Tibial artery (tissue), 4 donors: ENCODE measurements at regions of chr16 and their contacts with region 1.

Region 1: DNA sequence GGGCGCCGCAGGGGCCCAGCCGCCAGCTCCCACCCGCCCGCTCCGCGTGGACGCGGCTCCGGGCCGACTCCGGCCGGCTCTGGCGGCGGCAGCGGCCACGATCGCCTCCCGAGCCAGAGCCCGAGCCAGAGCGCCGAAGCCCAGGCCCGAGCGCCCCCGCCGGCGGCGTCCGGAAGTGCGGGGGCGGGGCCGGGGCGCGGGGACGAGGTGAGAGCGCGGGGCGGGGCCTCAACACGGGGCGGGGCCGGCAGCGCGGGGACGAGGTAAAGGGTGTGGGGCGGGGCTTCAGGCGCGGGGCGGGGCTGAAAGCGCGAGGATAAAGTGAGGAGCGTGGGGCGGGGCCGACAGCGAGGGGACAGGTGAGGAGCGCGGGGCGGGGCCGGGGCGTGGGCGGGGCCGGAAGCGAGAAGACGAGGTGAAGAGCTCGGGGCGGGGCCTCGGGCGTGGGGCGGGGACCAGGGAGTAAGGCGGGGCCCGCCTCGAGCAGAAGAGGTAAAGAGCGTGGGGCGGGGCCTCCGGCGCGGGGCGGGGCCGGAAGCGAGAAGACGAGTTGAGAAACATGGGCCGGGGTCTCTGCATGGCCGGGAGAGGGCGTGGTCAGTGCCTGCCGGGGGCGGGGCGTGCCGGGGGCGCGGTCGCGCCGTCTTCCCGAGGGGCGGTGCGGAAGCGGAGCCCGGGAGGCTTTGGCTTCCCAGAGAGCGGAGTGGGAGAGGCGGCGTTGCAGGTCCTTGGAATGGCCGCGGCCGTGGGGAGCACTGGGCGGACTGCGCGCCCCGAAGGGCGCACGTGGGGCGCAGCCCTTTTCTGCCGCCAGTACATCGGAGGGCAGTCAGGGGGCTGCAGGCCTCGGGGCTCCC is at the start of gene AXIN1:
- DNase-seq: peak; percentile 99 to 100
- H3K4me3 ChIP-seq: peak within 1 kb of the TSS; percentile 62 to 91
- H3K27ac ChIP-seq: peak within 1 kb of the TSS; percentile 81 to 90
- H3K4me1 ChIP-seq: peaks cover 0 to 23% (median 16%) of the 10 kb centered on the region in 4 donors
- H3K27me3 ChIP-seq: no peaks in the 10 kb centered on the region
- CTCF ChIP-seq: peak; percentile 51 to 62

Region 2: GRCh38 chr16:401468-402348 is 48.9 kb after region 1 on chr16 and contains the start of gene DECR2:
- intact Hi-C with region 1: loop called (anchors 5 kb)
- DNase-seq: peak; percentile 94 to 97
- H3K4me3 ChIP-seq: peak within 1 kb of the TSS; percentile 69 to 87
- H3K27ac ChIP-seq: peak within 1 kb of the TSS; percentile 83 to 95
- H3K4me1 ChIP-seq: peaks cover 0 to 28% (median 20%) of the 10 kb centered on the region in 4 donors
- H3K27me3 ChIP-seq: no peaks in the 10 kb centered on the region
- CTCF ChIP-seq: peak; percentile 39 to 41

Region 3: DNA sequence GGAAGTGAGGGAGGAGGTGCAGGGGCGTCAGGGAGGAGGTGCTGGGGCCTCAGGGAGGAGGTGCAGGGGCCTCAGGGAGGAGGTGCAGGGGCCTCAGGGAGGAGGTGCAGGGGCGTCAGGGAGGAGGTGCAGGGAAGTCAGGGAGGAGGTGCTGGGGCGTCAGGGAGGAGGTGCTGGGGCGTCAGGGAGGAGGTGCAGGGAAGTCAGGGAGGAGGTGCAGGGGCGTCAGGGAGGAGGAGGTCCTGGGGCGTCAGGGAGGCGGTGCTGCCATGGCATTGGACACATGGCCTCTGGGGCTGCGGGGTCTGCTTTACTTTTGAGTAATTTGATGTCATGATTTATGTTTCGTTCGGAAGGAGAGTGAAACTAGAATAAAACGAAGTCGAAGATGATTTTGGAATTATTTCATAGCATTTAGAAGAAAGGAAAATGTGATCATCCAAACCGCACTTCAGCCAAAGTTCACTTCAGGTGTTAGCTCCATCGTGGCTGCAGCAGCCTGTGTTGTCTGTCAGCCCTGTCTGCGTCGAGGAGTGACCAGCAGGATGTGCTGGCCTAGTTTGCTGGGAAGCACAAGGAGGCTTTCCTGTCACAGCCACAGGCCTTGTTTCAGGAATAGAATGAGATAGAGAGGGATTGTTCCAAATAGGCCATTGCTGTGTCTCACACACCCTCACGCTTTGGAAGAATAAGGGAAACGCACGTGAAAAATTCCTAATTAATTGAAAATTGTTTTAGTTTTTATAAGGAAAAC is 115.5 kb after region 1 on chr16:
- intact Hi-C with region 1: no loop called
- DNase-seq: no peak
- H3K4me3 ChIP-seq: no peak overlapping the region
- H3K27ac ChIP-seq: no peak overlapping the region
- H3K4me1 ChIP-seq: peaks cover 0 to 3% (median 0%) of the 10 kb centered on the region in 4 donors
- H3K27me3 ChIP-seq: no peaks in the 10 kb centered on the region
- CTCF ChIP-seq: no peak

Region 4: DNA sequence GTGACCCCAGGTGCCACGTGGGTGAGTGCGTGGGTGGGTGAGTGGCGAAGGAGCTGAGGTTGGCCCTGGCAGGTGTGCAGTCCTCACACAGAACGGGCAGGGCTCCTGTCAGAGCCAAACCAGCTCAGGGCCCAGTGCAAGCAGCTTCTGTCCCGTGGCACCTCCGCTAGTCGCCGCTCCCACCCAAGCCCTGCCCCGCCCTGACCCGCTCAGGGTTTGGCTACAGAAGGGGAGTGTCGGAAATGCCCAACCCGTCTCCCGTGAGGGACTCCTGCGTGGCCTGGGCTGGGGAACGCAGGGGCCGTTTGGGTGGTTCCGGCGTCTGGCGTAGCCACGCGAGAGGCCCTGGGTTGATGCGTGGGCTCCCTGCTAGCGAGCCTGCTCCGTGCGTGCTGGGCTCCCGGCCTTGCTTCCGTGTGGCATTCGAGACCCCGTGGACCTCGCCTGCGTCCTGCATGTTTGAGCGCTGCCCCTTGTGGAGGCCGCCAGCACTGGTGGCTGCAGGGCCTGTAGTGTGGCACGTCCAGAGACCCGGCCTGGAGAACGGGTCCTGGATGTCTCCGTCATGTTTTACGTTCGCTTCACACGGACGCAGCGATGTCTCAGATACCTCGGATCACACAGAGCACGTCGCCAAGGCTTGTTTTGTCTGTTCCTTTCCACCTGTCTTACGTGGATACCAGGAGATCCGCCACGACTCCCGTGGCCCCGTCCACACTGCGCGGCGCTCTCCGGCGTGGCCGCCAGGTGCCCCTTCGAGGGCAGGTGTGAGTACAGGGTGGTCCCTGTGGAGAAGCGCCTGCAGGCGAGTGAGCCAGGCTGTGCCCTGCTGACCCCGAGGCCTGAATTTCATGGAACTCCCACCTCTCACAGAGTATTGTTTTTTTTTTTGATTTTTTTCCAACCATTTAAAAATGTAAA is 184.9 kb after region 1 on chr16:
- intact Hi-C with region 1: no loop called
- DNase-seq: no peak
- H3K4me3 ChIP-seq: no peak overlapping the region
- H3K27ac ChIP-seq: no peak overlapping the region
- H3K4me1 ChIP-seq: peaks cover 0 to 5% (median 0%) of the 10 kb centered on the region in 4 donors
- H3K27me3 ChIP-seq: no peaks in the 10 kb centered on the region
- CTCF ChIP-seq: no peak

Region 5: GRCh38 chr16:592518-593306 is 239.9 kb after region 1 on chr16:
- intact Hi-C with region 1: no loop called
- DNase-seq: peak in 1 of 2 donors; percentile 61
- H3K4me3 ChIP-seq: no peak overlapping the region
- H3K27ac ChIP-seq: no peak overlapping the region
- H3K4me1 ChIP-seq: peaks cover 0 to 57% (median 33%) of the 10 kb centered on the region in 4 donors
- H3K27me3 ChIP-seq: no peaks in the 10 kb centered on the region
- CTCF ChIP-seq: no peak